Pancreas (tissue), 10 donors: ENCODE measurements at regions of chr9 and their contacts with region 1.

Region 1: GRCh38 chr9:127586537-127586936 is 25.5 kb upstream of the STXBP1 start:
- DNase-seq: peak; percentile 72 to 86 (median 80)
- ATAC-seq: peak; percentile 79 to 92 (median 90)
- H3K4me3 ChIP-seq: no peak overlapping the region
- H3K27ac ChIP-seq: no peak overlapping the region
- H3K4me1 ChIP-seq: no peaks in the 10 kb centered on the region
- H3K27me3 ChIP-seq: no peaks in the 10 kb centered on the region
- CTCF ChIP-seq: peak; percentile 60 to 79 (median 78)

Region 2: DNA sequence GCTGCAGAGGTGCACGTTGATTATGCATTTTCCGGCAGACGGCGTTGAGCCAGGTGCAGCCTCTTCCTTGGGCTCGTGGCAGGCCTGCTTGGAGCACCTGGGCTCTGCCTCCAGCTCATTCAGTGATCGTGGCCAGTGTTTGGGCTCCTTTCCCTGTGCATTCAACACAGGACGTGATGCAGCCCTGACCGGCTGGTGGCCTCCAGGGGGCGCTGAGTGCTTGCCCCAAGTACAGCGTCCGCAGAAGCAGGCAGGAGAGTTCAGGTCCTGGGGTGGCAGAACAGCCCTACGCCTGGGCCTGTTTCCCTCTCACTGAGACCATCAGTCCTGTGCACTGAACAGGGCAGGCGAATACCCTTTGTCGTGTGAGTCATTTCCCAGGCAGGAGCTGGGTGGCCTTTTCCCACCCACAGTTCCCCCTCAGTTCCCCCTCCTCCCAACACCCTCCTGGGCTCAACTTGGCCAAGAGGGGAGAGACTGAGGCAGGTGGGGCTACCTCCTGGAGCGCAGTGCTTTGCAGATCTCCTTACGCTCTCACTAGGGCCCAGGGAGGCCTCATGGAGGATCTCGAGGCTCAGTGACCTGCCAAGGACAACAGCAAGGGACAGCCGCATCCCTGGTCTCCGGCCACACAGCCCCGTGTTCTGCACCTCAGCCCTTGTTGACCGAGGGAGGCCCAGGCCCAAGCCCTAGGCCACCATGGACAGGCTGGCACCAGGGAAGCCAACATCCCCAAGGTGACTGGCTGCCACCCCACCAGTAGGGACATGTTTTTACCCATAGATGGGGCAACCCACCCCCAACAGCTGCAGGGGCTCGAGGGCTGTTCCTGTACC is 82.4 kb before region 1 on chr9:
- intact Hi-C with region 1: loop called (anchors 5 to 10 kb)
- DNase-seq: peak; percentile 75 to 94 (median 84)
- ATAC-seq: peak; percentile 75 to 87 (median 84)
- H3K4me3 ChIP-seq: no peak overlapping the region
- H3K27ac ChIP-seq: no peak overlapping the region
- H3K4me1 ChIP-seq: no peaks in the 10 kb centered on the region
- H3K27me3 ChIP-seq: no peaks in the 10 kb centered on the region
- CTCF ChIP-seq: peak; percentile 66 to 82 (median 72)

Region 3: GRCh38 chr9:127869310-127870152 is 283.0 kb after region 1 on chr9:
- intact Hi-C with region 1: loop called in 1 of 3 experiments (anchors 10 kb)
- DNase-seq: peak; percentile 81 to 97 (median 91)
- ATAC-seq: peak; percentile 84 to 95 (median 92)
- H3K4me3 ChIP-seq: no peak overlapping the region
- H3K27ac ChIP-seq: no peak overlapping the region
- H3K4me1 ChIP-seq: peaks cover 0 to under 1% (median 0%) of the 10 kb centered on the region in 3 donors
- H3K27me3 ChIP-seq: no peaks in the 10 kb centered on the region
- CTCF ChIP-seq: peak; percentile 71 to 78 (median 74)

Region 4: GRCh38 chr9:127921557-127922120 is 335.1 kb after region 1 on chr9:
- intact Hi-C with region 1: loop called in 2 of 3 experiments (anchors 5 to 10 kb)
- DNase-seq: peak in 4 of 6 donors; percentile 75 to 92 (median 86)
- ATAC-seq: peak in 3 of 4 donors; percentile 45 to 57 (median 52)
- H3K4me3 ChIP-seq: peak overlapping the region in 1 of 4 donors; percentile 17
- H3K27ac ChIP-seq: no peak overlapping the region
- H3K4me1 ChIP-seq: peaks cover 0 to 28% (median 0%) of the 10 kb centered on the region in 3 donors
- H3K27me3 ChIP-seq: no peaks in the 10 kb centered on the region
- CTCF ChIP-seq: peak; percentile 85 to 98 (median 95)